MCF 10A (cell line): ENCODE measurements at regions of chr13 and their contacts with region 1.

Region 1: GRCh38 chr13:51895906-51896888 is 34.4 kb downstream of the CCDC70 start:
- DNase-seq: peak; percentile 58
- H3K4me3 Mint-ChIP-seq: no peak overlapping the region
- H3K27ac Mint-ChIP-seq: no peak overlapping the region
- H3K4me1 Mint-ChIP-seq: no peaks in the 10 kb centered on the region
- H3K27me3 Mint-ChIP-seq: peaks cover 23% of the 10 kb centered on the region
- CTCF ChIP-seq: peak; percentile 68

Region 2: GRCh38 chr13:51249770-51250741 is 646.1 kb before region 1 on chr13:
- CTCF ChIA-PET with region 1: no interaction called
- POLR2A ChIA-PET with region 1: no interaction called
- intact Hi-C with region 1: no loop called
- DNase-seq: peak; percentile 20
- H3K4me3 Mint-ChIP-seq: no peak overlapping the region
- H3K27ac Mint-ChIP-seq: no peak overlapping the region
- H3K4me1 Mint-ChIP-seq: no peaks in the 10 kb centered on the region
- H3K27me3 Mint-ChIP-seq: no peaks in the 10 kb centered on the region
- CTCF ChIP-seq: no peak

Region 3: GRCh38 chr13:51911860-51912510 is 15.8 kb after region 1 on chr13:
- CTCF ChIA-PET with region 1: interaction called, 19 read pairs
- POLR2A ChIA-PET with region 1: no interaction called
- intact Hi-C with region 1: no loop called
- DNase-seq: no peak
- H3K4me3 Mint-ChIP-seq: no peak overlapping the region
- H3K27ac Mint-ChIP-seq: no peak overlapping the region
- H3K4me1 Mint-ChIP-seq: peaks cover 12% of the 10 kb centered on the region
- H3K27me3 Mint-ChIP-seq: peaks cover 42% of the 10 kb centered on the region
- CTCF ChIP-seq: no peak

Region 4: DNA sequence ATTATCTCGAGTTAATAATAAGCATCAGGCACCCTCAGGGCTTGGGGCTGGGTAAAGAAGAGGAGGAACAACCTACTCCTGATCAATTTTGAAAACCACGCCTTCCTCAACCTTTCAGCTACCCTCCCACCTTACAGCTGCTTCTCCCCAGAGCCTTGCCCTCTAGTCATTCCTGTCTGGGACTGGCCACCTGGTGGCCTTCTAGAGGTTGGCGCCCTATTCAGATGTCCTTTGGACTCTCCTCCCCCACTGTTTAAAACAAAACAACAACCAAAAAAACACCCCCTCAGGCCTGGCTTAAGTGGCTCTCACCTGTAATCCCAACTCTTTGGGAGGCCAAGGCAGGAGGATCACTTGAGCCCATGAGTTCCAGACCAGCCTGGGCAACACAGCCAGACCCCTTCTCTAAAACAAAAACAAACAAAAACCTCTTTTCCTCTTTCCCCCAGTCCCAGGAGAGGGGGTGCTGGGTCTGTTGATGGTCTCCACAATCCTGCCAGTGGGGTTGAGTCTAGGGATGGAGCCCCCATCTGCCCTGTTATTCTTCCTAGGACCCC is 27.9 kb after region 1 on chr13:
- CTCF ChIA-PET with region 1: interaction called, 21 read pairs
- POLR2A ChIA-PET with region 1: no interaction called
- intact Hi-C with region 1: no loop called
- DNase-seq: peak; percentile 31
- H3K4me3 Mint-ChIP-seq: no peak overlapping the region
- H3K27ac Mint-ChIP-seq: no peak overlapping the region
- H3K4me1 Mint-ChIP-seq: no peaks in the 10 kb centered on the region
- H3K27me3 Mint-ChIP-seq: no peaks in the 10 kb centered on the region
- CTCF ChIP-seq: peak; percentile 15

Region 5: GRCh38 chr13:51970349-51970748 is 74.2 kb after region 1 on chr13:
- CTCF ChIA-PET with region 1: no interaction called
- POLR2A ChIA-PET with region 1: no interaction called
- intact Hi-C with region 1: no loop called
- DNase-seq: no peak
- H3K4me3 Mint-ChIP-seq: no peak overlapping the region
- H3K27ac Mint-ChIP-seq: no peak overlapping the region
- H3K4me1 Mint-ChIP-seq: no peaks in the 10 kb centered on the region
- H3K27me3 Mint-ChIP-seq: no peaks in the 10 kb centered on the region
- CTCF ChIP-seq: no peak

Region 6: DNA sequence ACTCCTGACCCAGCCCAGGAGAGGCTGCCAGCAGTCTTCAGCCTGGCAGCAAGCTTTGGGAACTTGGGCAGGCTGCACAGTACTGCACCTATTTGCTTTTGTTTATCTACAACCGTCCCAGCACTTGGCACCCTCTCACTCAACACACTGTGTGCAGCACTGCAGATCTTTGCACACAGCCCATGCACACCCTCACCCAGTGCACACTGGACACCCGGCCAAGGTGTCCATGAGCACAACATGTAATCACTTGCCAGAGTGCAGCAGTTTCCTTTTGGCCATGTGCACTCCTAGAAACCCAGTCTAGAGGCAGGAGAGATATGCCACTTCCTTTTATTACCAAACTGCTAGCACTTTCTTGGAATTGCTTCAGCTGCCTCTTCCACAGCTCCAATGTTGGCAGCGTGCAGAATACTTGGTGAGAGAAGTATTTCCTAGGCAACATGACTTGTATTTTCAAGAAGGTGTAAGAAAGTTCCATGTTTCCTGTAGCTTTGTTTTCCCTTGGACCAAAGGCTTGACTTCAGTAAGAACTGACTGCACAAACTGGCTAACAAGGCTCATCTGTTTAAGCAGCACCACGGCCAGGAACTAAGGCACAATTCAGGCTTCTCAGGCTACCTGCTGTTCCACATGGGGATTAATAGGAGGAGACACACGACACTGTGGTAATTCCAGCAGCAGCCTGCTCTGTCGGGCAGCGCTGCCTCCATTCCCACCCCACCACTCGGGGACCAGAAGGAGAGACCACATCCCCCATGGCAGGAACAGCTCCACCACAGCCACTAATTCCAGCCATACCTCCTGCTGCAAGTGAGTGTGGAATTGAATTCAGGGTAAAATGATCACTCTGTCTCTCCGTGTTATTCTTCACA is 99.7 kb after region 1 on chr13:
- CTCF ChIA-PET with region 1: interaction called, 25 read pairs
- POLR2A ChIA-PET with region 1: interaction called, 3 read pairs
- intact Hi-C with region 1: loop called (anchors 5 kb)
- DNase-seq: peak; percentile 23
- H3K4me3 Mint-ChIP-seq: no peak overlapping the region
- H3K27ac Mint-ChIP-seq: peak overlapping the region; percentile 29
- H3K4me1 Mint-ChIP-seq: peaks cover 18% of the 10 kb centered on the region
- H3K27me3 Mint-ChIP-seq: peaks cover 12% of the 10 kb centered on the region
- CTCF ChIP-seq: no peak

Region 7: GRCh38 chr13:52001120-52001731 is 105.0 kb after region 1 on chr13:
- CTCF ChIA-PET with region 1: interaction called, 25 read pairs
- POLR2A ChIA-PET with region 1: interaction called, 3 read pairs
- intact Hi-C with region 1: loop called (anchors 5 kb)
- DNase-seq: peak; percentile 51
- H3K4me3 Mint-ChIP-seq: no peak overlapping the region
- H3K27ac Mint-ChIP-seq: no peak overlapping the region
- H3K4me1 Mint-ChIP-seq: peaks cover 27% of the 10 kb centered on the region
- H3K27me3 Mint-ChIP-seq: peaks cover 12% of the 10 kb centered on the region
- CTCF ChIP-seq: peak; percentile 60

Region 8: GRCh38 chr13:52194184-52194868 is 298.1 kb after region 1 on chr13:
- CTCF ChIA-PET with region 1: interaction called, 4 read pairs
- POLR2A ChIA-PET with region 1: no interaction called
- intact Hi-C with region 1: loop called (anchors 1 kb)
- DNase-seq: peak; percentile 85
- H3K4me3 Mint-ChIP-seq: peak overlapping the region; percentile 96
- H3K27ac Mint-ChIP-seq: peak overlapping the region; percentile 91
- H3K4me1 Mint-ChIP-seq: peaks cover 6% of the 10 kb centered on the region
- H3K27me3 Mint-ChIP-seq: no peaks in the 10 kb centered on the region
- CTCF ChIP-seq: no peak